ENCODE measurements at regions of chr17 and their contacts with region 1.

Region 1: DNA sequence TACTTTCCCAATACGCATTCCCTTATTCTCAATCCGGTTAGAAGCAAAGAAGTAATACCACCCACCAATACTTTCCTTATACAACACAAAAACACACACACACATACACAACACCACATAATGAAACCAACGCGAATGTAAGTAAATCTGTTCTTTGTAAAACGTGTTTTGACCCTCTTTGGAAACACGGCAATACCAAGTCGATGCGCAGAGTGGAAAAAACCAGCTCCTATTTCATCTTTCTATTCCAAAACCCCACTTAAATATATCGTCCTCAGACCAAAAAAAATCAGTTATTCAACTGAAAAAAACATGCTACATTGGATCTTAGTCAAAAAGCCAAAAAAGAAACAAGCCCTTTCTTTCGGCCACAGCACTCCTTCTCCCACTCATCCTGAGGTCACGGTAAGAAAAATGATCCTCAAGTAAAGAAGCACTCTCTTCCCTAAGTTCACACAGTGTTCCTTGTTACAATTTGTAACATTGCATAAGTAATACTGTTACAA is 31.0 kb upstream of the ARL4D start:
- DNase-seq: no peak
- ATAC-seq: peak; percentile 45
- H3K4me3 Mint-ChIP-seq: peak overlapping the region; percentile 95
- H3K27ac Mint-ChIP-seq: peak overlapping the region; percentile 100
- H3K4me1 Mint-ChIP-seq: peaks cover 51% of the 10 kb centered on the region
- H3K27me3 Mint-ChIP-seq: no peaks in the 10 kb centered on the region
- CTCF ChIP-seq: no peak

Region 2: GRCh38 chr17:42980398-42981397 is 387.1 kb before region 1 on chr17 and contains the start of gene RUNDC1:
- CTCF ChIA-PET with region 1: no interaction called
- POLR2A ChIA-PET with region 1: interaction called, 21 read pairs
- intact Hi-C with region 1: no loop called
- DNase-seq: peak; percentile 94
- ATAC-seq: peak; percentile 76
- H3K4me3 Mint-ChIP-seq: peak within 1 kb of the TSS; percentile 99
- H3K27ac Mint-ChIP-seq: peak within 1 kb of the TSS; percentile 98
- H3K4me1 Mint-ChIP-seq: peaks cover 53% of the 10 kb centered on the region
- H3K27me3 Mint-ChIP-seq: no peaks in the 10 kb centered on the region
- CTCF ChIP-seq: no peak
- total RNA-seq, gene RUNDC1: 28.3 and 30.9 TPM in 2 replicates

Region 3: GRCh38 chr17:43024407-43025289 is 343.1 kb before region 1 on chr17 and contains the start of gene RND2:
- CTCF ChIA-PET with region 1: no interaction called
- POLR2A ChIA-PET with region 1: interaction called, 14 read pairs
- intact Hi-C with region 1: no loop called
- DNase-seq: peak; percentile 79
- ATAC-seq: peak; percentile 65
- H3K4me3 Mint-ChIP-seq: peak within 1 kb of the TSS; percentile 92
- H3K27ac Mint-ChIP-seq: peak within 1 kb of the TSS; percentile 87
- H3K4me1 Mint-ChIP-seq: peaks cover 24% of the 10 kb centered on the region
- H3K27me3 Mint-ChIP-seq: no peaks in the 10 kb centered on the region
- CTCF ChIP-seq: no peak
- total RNA-seq, gene RND2: 0.05 and 0.13 TPM in 2 replicates

Region 4: DNA sequence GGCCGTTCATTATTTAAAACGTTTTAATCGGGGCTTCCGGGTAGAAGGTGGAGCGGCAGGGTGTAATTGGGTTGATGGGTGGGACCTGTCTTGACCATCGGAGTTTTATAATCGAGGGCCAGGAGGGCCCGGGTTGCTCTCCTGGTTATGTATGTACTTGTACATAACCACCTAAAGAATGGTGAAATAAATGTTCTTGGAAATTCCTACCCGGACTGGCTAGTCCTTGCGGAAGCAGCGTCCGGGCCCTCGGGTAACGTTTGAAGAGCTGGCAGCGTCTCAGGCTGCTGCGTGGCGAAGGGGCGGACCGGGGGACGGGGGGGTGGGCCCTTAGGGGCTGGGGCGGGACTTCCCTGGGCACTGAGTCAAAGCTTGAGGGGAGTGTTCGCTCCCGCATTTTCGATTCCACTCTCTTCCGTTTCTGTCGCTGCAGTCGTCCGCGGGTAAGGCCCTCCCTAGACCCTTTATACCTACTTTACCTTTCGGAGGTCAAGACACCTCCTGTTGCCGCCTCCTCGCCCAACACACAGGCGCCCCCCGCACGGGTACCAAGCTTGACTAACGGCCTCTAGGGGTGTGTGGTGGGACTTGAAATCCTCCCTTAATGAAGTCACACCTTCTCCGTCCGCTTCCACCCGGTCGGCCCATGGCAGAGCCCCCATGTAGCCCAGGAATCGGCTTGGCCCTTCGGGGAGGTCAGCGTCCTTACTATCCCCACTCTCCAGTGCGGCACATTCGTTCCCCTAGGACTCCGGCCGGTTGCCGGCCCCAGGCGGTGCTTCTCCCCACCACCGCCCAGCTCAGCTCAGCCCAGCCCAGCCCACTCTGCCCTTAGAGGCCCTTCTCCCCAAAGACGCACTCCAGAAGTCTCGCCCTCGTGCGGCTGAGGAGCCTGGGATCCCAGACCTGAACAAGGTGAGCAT is 156.0 kb before region 1 on chr17 and contains the start of gene TMEM106A:
- CTCF ChIA-PET with region 1: no interaction called
- POLR2A ChIA-PET with region 1: interaction called, 45 read pairs
- intact Hi-C with region 1: no loop called
- DNase-seq: peak; percentile 69
- ATAC-seq: peak; percentile 89
- H3K4me3 Mint-ChIP-seq: peak within 1 kb of the TSS; percentile 100
- H3K27ac Mint-ChIP-seq: peak within 1 kb of the TSS; percentile 98
- H3K4me1 Mint-ChIP-seq: peaks cover 45% of the 10 kb centered on the region
- H3K27me3 Mint-ChIP-seq: no peaks in the 10 kb centered on the region
- CTCF ChIP-seq: no peak
- total RNA-seq, gene TMEM106A: 46.0 and 68.0 TPM in 2 replicates

Region 5: DNA sequence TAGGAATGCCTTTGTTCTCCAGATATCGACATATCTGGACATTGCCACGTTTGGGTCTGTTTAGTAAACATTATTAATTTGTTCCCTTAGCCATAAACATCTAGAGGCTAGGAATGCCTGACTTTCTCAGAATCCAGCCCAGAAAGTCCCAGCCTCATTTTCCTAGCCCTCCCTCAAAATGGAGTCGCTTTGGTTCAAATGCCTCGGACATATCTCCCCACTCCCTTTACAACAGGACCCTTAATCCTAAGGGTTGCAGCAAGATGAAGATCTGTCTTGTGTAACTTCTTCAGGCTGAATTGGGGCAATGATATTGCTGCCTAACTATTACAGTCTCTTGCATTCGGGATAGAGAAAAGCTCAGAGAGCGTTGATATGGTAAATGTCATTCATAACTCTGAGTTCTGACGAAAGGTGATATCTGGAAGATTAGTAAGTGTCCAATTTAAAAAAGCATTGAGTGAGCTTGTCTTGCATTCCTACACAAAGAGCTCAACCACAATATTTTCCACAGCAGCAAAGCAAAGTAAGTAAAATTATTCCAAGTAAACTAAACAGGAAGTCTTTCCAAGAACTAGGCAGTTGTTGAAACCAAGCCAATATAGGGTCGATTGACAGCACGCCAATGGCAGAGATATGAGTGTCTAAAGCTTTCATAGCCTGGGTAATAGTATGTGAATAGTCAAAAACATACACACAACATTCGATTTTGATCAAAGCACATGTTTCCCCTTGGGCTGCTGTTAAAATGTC is 15.0 kb before region 1 on chr17:
- CTCF ChIA-PET with region 1: no interaction called
- POLR2A ChIA-PET with region 1: interaction called, 195 read pairs
- intact Hi-C with region 1: no loop called
- DNase-seq: no peak
- ATAC-seq: no peak
- H3K4me3 Mint-ChIP-seq: no peak overlapping the region
- H3K27ac Mint-ChIP-seq: no peak overlapping the region
- H3K4me1 Mint-ChIP-seq: no peaks in the 10 kb centered on the region
- H3K27me3 Mint-ChIP-seq: no peaks in the 10 kb centered on the region
- CTCF ChIP-seq: no peak

Region 6: GRCh38 chr17:43393944-43394482 is 26.2 kb after region 1 on chr17:
- CTCF ChIA-PET with region 1: interaction called, 16 read pairs
- POLR2A ChIA-PET with region 1: interaction called, 546 read pairs
- intact Hi-C with region 1: loop called (anchors 1 kb)
- DNase-seq: peak; percentile 66
- ATAC-seq: peak; percentile 35
- H3K4me3 Mint-ChIP-seq: no peak overlapping the region
- H3K27ac Mint-ChIP-seq: peak overlapping the region; percentile 41
- H3K4me1 Mint-ChIP-seq: peaks cover 42% of the 10 kb centered on the region
- H3K27me3 Mint-ChIP-seq: no peaks in the 10 kb centered on the region
- CTCF ChIP-seq: no peak

Region 7: GRCh38 chr17:43524945-43525575 is 157.3 kb after region 1 on chr17:
- CTCF ChIA-PET with region 1: no interaction called
- POLR2A ChIA-PET with region 1: no interaction called
- intact Hi-C with region 1: no loop called
- DNase-seq: no peak
- ATAC-seq: no peak
- H3K4me3 Mint-ChIP-seq: no peak overlapping the region
- H3K27ac Mint-ChIP-seq: no peak overlapping the region
- H3K4me1 Mint-ChIP-seq: no peaks in the 10 kb centered on the region
- H3K27me3 Mint-ChIP-seq: no peaks in the 10 kb centered on the region
- CTCF ChIP-seq: no peak